Activated CD4-positive, alpha-beta T cell treated with anti-CD3 and anti-CD28 coated beads, Interleukin-2, amount 10 ng/mL, durations not matched to agents 7 days and 5 days (primary cell): ENCODE measurements at regions of chr11 and their contacts with region 1.

Region 1: GRCh38 chr11:15720460-15720859 is 605.7 kb downstream of the INSC start:
- DNase-seq: no peak
- H3K4me3 Mint-ChIP-seq: no peak overlapping the region
- H3K27ac Mint-ChIP-seq: no peak overlapping the region
- H3K4me1 Mint-ChIP-seq: no peaks in the 10 kb centered on the region
- H3K27me3 Mint-ChIP-seq: no peaks in the 10 kb centered on the region

Region 2: DNA sequence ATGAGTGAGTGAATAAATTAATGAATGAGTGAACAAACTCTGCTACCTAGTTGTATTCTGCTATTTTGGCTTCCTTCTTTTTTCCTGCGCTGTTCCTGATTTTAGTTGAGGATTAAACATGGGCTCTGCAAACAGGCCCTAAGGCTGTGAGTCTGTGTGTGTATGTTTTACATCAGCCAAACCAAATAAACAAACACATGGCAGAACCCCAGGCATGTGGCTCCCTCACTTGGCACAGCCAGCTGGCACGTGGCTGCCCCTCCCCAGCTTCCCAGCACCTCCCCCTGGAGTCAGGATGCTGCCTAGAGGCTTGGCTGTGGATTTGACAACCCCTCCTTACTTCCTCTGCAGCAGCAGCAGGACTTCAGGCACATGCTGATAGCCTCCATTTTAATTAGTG is 12.5 kb before region 1 on chr11:
- CTCF ChIA-PET with region 1: no interaction called
- POLR2A ChIA-PET with region 1: no interaction called
- DNase-seq: no peak
- H3K4me3 Mint-ChIP-seq: no peak overlapping the region
- H3K27ac Mint-ChIP-seq: no peak overlapping the region
- H3K4me1 Mint-ChIP-seq: no peaks in the 10 kb centered on the region
- H3K27me3 Mint-ChIP-seq: no peaks in the 10 kb centered on the region

Region 3: DNA sequence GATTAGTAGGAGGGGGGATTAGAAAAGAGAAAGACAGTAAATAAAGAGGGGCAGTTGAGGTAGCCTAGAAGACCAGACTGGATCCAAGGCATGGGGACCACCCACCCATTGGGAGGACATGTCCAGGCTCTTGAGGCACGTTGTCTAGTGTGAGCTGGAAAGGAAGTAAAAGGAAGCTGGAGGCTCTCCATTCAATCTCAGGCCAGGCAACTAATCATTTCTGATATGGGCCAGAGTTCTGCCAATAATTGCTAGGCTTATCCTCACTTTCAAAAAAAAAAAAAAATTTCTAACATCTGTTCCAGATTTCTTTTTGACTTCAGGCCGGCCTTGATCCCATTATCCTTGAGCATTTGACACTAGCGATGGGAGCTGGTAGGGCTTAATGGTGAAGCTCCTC is 159.8 kb after region 1 on chr11:
- CTCF ChIA-PET with region 1: no interaction called
- POLR2A ChIA-PET with region 1: interaction called, 10 read pairs
- DNase-seq: no peak
- H3K4me3 Mint-ChIP-seq: no peak overlapping the region
- H3K27ac Mint-ChIP-seq: no peak overlapping the region
- H3K4me1 Mint-ChIP-seq: no peaks in the 10 kb centered on the region
- H3K27me3 Mint-ChIP-seq: no peaks in the 10 kb centered on the region